ENCODE measurements at regions of chr12 and their contacts with region 1.

Region 1: GRCh38 chr12:19288603-19289244 is 150.6 kb upstream of the AEBP2 start:
- DNase-seq: peak in 3 of 14 experiments; percentile 29 to 31 (median 30)
- ATAC-seq: no peak
- H3K4me3 ChIP-seq: no peak overlapping the region
- H3K4me3 Mint-ChIP-seq: no peak overlapping the region
- H3K27ac ChIP-seq: no peak overlapping the region
- H3K27ac Mint-ChIP-seq: no peak overlapping the region
- H3K4me1 ChIP-seq: no peaks in the 10 kb centered on the region
- H3K4me1 Mint-ChIP-seq: no peaks in the 10 kb centered on the region
- H3K27me3 ChIP-seq: no peaks in the 10 kb centered on the region
- H3K27me3 Mint-ChIP-seq: no peaks in the 10 kb centered on the region
- CTCF ChIP-seq: peak; percentile 69

Region 2: GRCh38 chr12:18861287-18861858 is 427.4 kb before region 1 on chr12:
- CTCF ChIA-PET with region 1: no interaction called
- POLR2A ChIA-PET with region 1: no interaction called
- intact Hi-C with region 1: loop called in 1 of 2 experiments (anchors 5 kb)
- DNase-seq: peak in 3 of 14 experiments; percentile 20 to 24 (median 20)
- ATAC-seq: no peak
- H3K4me3 ChIP-seq: no peak overlapping the region
- H3K4me3 Mint-ChIP-seq: no peak overlapping the region
- H3K27ac ChIP-seq: no peak overlapping the region
- H3K27ac Mint-ChIP-seq: no peak overlapping the region
- H3K4me1 ChIP-seq: no peaks in the 10 kb centered on the region
- H3K4me1 Mint-ChIP-seq: no peaks in the 10 kb centered on the region
- H3K27me3 ChIP-seq: no peaks in the 10 kb centered on the region
- H3K27me3 Mint-ChIP-seq: no peaks in the 10 kb centered on the region
- CTCF ChIP-seq: peak; percentile 42

Region 3: DNA sequence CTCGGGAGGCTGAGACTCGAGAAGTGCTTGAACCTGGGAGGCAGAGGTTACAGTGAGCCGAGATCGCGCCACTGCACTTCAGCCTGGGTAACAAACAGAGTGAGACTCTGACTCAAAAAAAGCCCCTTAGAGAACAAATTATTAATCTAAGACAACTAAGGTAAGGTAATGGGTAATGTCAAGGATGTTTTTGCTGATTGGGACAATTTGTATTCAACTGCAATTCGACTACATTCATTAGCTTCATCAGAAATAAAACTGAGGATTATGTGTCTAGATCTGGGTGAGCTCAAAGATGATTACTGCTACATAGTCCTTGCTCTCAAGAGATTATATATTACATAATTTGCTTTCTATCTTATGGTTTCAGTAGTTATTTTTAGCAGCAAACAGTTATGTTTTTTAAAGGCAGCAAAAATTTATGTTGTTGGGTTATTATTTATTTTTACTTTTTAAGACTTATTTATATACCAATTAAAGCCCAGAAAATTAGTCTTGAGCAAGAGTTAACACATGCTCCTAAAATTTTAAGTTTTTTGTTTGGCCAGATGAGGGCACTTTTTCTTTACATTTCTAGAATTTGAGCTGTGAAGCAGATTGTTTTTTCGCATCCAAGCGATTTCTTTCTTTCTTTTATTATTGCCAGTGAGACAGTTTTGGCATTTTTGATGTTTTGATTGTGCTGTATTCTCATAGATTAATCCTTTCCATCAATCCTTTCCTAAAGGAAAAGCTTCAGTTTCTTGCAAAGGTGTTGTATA is 106.9 kb before region 1 on chr12:
- CTCF ChIA-PET with region 1: no interaction called
- POLR2A ChIA-PET with region 1: no interaction called
- intact Hi-C with region 1: loop called (anchors 5 to 10 kb)
- DNase-seq: no peak
- ATAC-seq: no peak
- H3K4me3 ChIP-seq: no peak overlapping the region
- H3K4me3 Mint-ChIP-seq: no peak overlapping the region
- H3K27ac ChIP-seq: no peak overlapping the region
- H3K27ac Mint-ChIP-seq: no peak overlapping the region
- H3K4me1 ChIP-seq: no peaks in the 10 kb centered on the region
- H3K4me1 Mint-ChIP-seq: no peaks in the 10 kb centered on the region
- H3K27me3 ChIP-seq: no peaks in the 10 kb centered on the region
- H3K27me3 Mint-ChIP-seq: no peaks in the 10 kb centered on the region
- CTCF ChIP-seq: no peak

Region 4: DNA sequence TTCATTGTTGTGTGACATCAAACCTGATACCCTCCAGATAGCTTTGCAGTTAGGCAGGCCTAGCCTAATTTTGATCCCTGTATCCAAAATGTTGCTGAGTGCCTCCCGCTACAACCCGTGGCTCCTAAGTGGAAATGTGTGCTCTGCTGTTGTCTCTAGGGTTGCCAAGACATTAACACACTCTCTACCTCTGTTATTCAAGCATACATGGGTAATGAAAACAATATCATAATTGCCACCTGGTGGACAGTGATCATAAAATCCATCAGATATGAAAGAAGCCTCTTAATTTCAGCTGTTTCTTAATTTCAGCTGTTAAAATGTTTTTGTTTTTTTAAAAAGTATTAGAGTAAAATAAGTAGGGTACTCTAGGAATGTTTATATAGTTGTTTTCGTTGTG is 65.7 kb before region 1 on chr12:
- CTCF ChIA-PET with region 1: no interaction called
- POLR2A ChIA-PET with region 1: no interaction called
- intact Hi-C with region 1: no loop called
- DNase-seq: no peak
- ATAC-seq: no peak
- H3K4me3 ChIP-seq: no peak overlapping the region
- H3K4me3 Mint-ChIP-seq: no peak overlapping the region
- H3K27ac ChIP-seq: no peak overlapping the region
- H3K27ac Mint-ChIP-seq: no peak overlapping the region
- H3K4me1 ChIP-seq: no peaks in the 10 kb centered on the region
- H3K4me1 Mint-ChIP-seq: no peaks in the 10 kb centered on the region
- H3K27me3 ChIP-seq: no peaks in the 10 kb centered on the region
- H3K27me3 Mint-ChIP-seq: no peaks in the 10 kb centered on the region
- CTCF ChIP-seq: no peak

Region 5: DNA sequence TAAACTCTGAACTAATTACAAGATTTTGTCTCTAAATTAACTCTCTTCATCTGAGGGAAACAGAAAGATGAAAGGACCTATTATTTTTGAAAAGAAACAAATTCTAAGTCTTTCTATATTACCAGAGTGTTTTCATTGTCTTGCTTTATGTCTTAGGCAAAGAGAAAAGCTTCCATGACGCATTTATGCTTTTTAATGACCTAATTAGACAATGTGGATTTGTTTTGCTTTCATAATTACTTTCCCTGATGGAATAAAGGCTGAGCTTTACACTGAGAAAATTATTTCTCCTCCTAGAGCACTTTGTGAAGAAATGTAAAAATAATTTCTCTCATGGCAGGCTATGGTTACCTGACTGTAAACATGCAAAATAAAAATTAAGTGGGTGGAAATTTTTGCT is 1268.4 kb after region 1 on chr12:
- CTCF ChIA-PET with region 1: no interaction called
- POLR2A ChIA-PET with region 1: no interaction called
- intact Hi-C with region 1: no loop called
- DNase-seq: no peak
- ATAC-seq: no peak
- H3K4me3 ChIP-seq: no peak overlapping the region
- H3K4me3 Mint-ChIP-seq: no peak overlapping the region
- H3K27ac ChIP-seq: no peak overlapping the region
- H3K27ac Mint-ChIP-seq: no peak overlapping the region
- H3K4me1 ChIP-seq: no peaks in the 10 kb centered on the region
- H3K4me1 Mint-ChIP-seq: no peaks in the 10 kb centered on the region
- H3K27me3 ChIP-seq: no peaks in the 10 kb centered on the region
- H3K27me3 Mint-ChIP-seq: no peaks in the 10 kb centered on the region
- CTCF ChIP-seq: no peak